ENCODE measurements at regions of chr2 and their contacts with region 1.

Region 1: GRCh38 chr2:136135921-136136906 is 18.3 kb upstream of the CXCR4 start:
- DNase-seq: peak; percentile 75
- H3K4me3 Mint-ChIP-seq: peak overlapping the region; percentile 11
- H3K27ac Mint-ChIP-seq: peak overlapping the region; percentile 70
- H3K4me1 Mint-ChIP-seq: peaks cover 89% of the 10 kb centered on the region
- H3K27me3 Mint-ChIP-seq: peaks cover 14% of the 10 kb centered on the region

Region 2: DNA sequence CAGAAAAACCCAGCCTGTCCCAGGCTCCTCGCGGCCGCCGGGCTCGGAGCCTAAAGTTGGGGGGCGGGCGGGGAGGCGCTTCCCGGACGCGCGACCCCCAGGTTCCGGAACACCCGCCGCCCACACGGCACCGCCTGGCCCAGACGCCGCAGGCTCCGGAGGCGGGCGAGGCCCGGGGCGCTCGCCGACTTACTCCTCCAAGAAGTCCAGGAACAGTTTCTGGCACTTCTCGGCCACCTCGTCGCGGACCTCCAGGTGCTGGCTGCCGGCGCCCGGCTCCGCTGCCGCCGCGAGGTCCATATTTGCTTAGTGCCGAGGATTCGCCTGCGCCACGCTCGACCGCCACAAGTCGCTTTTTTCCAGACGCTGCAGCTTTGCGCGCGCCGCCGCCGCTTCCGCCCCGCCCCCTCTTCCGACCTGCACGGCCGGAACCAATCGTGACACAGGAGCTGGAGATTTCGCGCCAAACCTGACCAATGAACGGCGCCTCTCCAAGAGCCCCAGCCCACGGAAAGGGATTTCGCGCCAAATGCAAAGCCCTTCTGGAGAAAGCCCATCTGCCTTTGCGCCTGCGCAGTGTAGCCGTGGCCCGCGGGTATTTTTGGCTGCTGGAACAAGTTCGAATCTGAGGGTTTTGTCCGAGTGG is 260.0 kb before region 1 on chr2 and contains the start of gene MCM6:
- CTCF ChIA-PET with region 1: no interaction called
- POLR2A ChIA-PET with region 1: interaction called, 7 read pairs
- intact Hi-C with region 1: loop called (anchors 2 kb)
- DNase-seq: peak; percentile 100
- H3K4me3 Mint-ChIP-seq: peak within 1 kb of the TSS; percentile 90
- H3K27ac Mint-ChIP-seq: peak within 1 kb of the TSS; percentile 98
- H3K4me1 Mint-ChIP-seq: peaks cover 39% of the 10 kb centered on the region
- H3K27me3 Mint-ChIP-seq: peaks cover 2% of the 10 kb centered on the region
- total RNA-seq, gene MCM6: 280 to 284 TPM

Region 3: GRCh38 chr2:135985018-135985825 is 151.0 kb before region 1 on chr2 and contains the start of gene DARS1:
- CTCF ChIA-PET with region 1: interaction called, 8 read pairs
- POLR2A ChIA-PET with region 1: interaction called, 6 read pairs
- intact Hi-C with region 1: loop called (anchors 1 kb)
- DNase-seq: peak; percentile 92
- H3K4me3 Mint-ChIP-seq: peak within 1 kb of the TSS; percentile 90
- H3K27ac Mint-ChIP-seq: peak within 1 kb of the TSS; percentile 97
- H3K4me1 Mint-ChIP-seq: peaks cover 48% of the 10 kb centered on the region
- H3K27me3 Mint-ChIP-seq: no peaks in the 10 kb centered on the region
- total RNA-seq, gene DARS1: 215 to 218 TPM

Region 4: GRCh38 chr2:136117909-136118818 is 18.1 kb before region 1 on chr2 and contains the start of gene CXCR4:
- CTCF ChIA-PET with region 1: interaction called, 6 read pairs
- POLR2A ChIA-PET with region 1: interaction called, 8 read pairs
- intact Hi-C with region 1: loop called (anchors 1 kb)
- DNase-seq: peak; percentile 93
- H3K4me3 Mint-ChIP-seq: peak within 1 kb of the TSS; percentile 98
- H3K27ac Mint-ChIP-seq: peak within 1 kb of the TSS; percentile 98
- H3K4me1 Mint-ChIP-seq: peaks cover 54% of the 10 kb centered on the region
- H3K27me3 Mint-ChIP-seq: peaks cover 2% of the 10 kb centered on the region
- total RNA-seq, gene CXCR4: 139 to 141 TPM

Region 5: GRCh38 chr2:136305517-136306192 is 169.4 kb after region 1 on chr2:
- CTCF ChIA-PET with region 1: interaction called, 3 read pairs
- POLR2A ChIA-PET with region 1: interaction called, 11 read pairs
- intact Hi-C with region 1: loop called (anchors 1 kb)
- DNase-seq: peak; percentile 84
- H3K4me3 Mint-ChIP-seq: peak overlapping the region; percentile 33
- H3K27ac Mint-ChIP-seq: peak overlapping the region; percentile 72
- H3K4me1 Mint-ChIP-seq: peaks cover 34% of the 10 kb centered on the region
- H3K27me3 Mint-ChIP-seq: peaks cover 3% of the 10 kb centered on the region

Region 6: DNA sequence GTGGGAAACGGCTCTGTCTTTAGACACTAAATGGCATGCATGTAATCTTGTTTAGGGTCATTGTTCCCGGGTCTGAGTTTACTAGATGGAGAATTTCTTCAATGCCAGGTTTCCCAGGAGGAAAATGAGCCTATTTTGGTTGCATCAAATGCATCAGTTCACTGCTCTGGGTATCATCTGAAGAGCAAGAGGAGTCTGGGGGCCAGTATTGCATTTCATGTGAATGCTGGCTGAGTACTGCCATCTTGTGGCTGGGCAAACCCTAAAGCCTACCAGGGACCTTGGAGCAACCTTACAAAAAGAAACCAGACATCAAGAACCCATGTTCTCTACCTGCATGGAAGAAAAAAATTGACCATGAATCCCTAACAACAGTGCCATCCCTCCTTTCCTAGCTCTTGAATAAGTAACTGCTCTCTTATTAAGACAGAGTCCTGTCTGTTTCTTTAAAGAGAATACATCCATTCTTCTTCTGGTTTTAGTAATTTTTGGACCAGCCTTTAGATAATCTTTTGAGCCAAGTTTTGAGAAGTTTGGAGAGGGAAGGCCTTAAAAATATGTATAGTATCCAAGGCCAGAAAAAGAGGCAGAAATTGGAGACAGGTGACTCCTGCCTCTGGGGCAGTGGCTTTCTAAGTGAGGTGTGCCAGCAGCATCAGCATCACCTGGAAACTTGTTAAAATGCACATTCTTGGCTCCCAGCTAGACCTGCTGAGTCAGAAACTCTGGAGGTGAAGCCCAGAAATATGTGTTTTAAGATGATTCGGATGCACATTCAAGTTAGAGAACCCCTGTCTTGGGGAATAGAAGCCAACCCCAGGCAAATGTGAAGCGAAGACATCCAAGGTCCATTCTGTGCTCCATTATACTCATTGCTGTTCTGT is 242.7 kb after region 1 on chr2:
- CTCF ChIA-PET with region 1: interaction called, 10 read pairs
- POLR2A ChIA-PET with region 1: interaction called, 11 read pairs
- intact Hi-C with region 1: loop called (anchors 1 kb)
- DNase-seq: peak; percentile 88
- H3K4me3 Mint-ChIP-seq: no peak overlapping the region
- H3K27ac Mint-ChIP-seq: peak overlapping the region; percentile 44
- H3K4me1 Mint-ChIP-seq: peaks cover 87% of the 10 kb centered on the region
- H3K27me3 Mint-ChIP-seq: no peaks in the 10 kb centered on the region